ENCODE measurements at regions of chr18 and their contacts with region 1.

Region 1: GRCh38 chr18:49728542-49728941 is 84.8 kb downstream of the ACAA2 start:
- DNase-seq: peak; percentile 57
- H3K4me3 ChIP-seq: no peak overlapping the region
- H3K27ac ChIP-seq: no peak overlapping the region
- H3K4me1 ChIP-seq: peaks cover 48% of the 10 kb centered on the region
- H3K27me3 ChIP-seq: no peaks in the 10 kb centered on the region
- CTCF ChIP-seq: peak; percentile 87 to 88

Region 2: DNA sequence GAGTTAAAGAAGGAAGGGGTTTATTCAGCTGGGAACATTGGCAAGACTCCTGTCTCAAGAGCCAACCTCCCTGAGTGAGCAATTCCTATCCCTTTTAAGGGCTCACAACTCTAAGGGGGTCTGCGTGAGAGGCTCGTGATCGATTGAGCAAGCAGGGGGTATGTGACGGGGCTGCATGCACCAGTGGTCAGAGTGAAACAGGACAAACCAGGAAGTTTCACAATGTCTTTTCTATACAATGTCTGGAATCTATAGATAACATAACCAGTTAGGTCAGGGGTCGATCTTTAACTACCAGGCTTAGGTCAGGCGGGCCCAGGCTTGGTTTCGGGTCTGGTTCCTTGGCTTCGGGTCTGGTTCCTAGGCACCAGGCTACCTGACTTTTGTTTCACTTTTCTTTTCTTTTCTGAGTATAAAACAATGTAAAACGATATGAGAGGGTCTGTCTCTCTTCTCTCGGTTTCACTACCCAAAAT is 196.8 kb before region 1 on chr18:
- CTCF ChIA-PET with region 1: no interaction called
- dilution Hi-C with region 1: no loop called
- in situ Hi-C with region 1: no loop called
- intact Hi-C with region 1: no loop called
- DNase-seq: no peak
- H3K4me3 ChIP-seq: no peak overlapping the region
- H3K27ac ChIP-seq: no peak overlapping the region
- H3K4me1 ChIP-seq: no peaks in the 10 kb centered on the region
- H3K27me3 ChIP-seq: no peaks in the 10 kb centered on the region
- CTCF ChIP-seq: no peak

Region 3: DNA sequence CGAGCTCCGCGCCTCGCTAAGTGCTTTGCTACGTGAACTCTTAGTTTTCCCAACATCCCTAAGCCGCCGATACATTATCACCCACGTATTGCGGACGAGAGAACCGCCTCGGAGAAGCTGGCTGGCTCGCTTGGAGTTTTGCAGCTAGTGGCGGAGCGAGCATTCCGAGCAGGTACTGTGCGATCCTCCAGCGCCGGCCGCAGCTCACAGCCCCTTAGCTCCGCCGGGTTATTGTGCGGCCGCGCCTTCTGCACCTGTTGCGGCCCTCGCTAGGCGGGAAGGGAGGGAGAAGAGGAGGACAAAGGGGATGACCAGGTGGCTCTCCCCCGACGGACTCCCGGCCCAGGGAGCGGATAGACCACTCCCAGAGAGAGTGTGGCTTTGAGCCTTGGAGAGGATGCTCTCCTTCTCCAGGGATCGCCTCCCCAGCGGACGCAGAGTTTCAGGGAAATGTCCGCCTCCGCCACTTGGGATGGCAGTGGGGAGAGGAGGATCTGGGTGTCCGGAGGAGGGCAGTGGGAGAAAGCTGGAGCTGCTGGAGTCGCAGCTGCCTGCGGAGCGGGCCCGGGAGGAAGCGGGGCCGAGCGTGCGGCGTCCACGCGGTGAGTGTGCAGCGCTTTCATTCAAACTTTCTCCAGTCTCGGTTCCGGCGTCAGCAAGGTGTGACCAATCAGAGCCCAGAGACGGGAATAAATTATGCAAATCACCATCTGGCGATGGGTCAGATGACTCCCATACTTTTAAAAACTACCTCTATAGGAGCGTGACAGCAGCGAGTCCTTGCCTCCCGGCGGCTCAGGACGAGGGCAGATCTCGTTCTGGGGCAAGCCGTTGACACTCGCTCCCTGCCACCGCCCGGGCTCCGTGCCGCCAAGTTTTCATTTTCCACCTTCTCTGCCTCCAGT is 167.0 kb before region 1 on chr18 and contains the start of gene LIPG:
- CTCF ChIA-PET with region 1: no interaction called
- dilution Hi-C with region 1: no loop called
- in situ Hi-C with region 1: no loop called
- intact Hi-C with region 1: loop called (anchors 1 kb)
- DNase-seq: peak; percentile 97
- H3K4me3 ChIP-seq: peak within 1 kb of the TSS; percentile 40 to 70 (median 61)
- H3K27ac ChIP-seq: peak within 1 kb of the TSS; percentile 65
- H3K4me1 ChIP-seq: peaks cover 28% of the 10 kb centered on the region
- H3K27me3 ChIP-seq: no peaks in the 10 kb centered on the region
- CTCF ChIP-seq: no peak
- total RNA-seq, gene LIPG: 78.8 to 153 TPM

Region 4: GRCh38 chr18:49628881-49629795 is 99.4 kb before region 1 on chr18:
- CTCF ChIA-PET with region 1: no interaction called
- dilution Hi-C with region 1: loop called (anchors 5 kb)
- in situ Hi-C with region 1: no loop called
- intact Hi-C with region 1: no loop called
- DNase-seq: no peak
- H3K4me3 ChIP-seq: no peak overlapping the region
- H3K27ac ChIP-seq: no peak overlapping the region
- H3K4me1 ChIP-seq: peaks cover 5% of the 10 kb centered on the region
- H3K27me3 ChIP-seq: no peaks in the 10 kb centered on the region
- CTCF ChIP-seq: peak in 1 of 2 donors; percentile 31

Region 5: GRCh38 chr18:49656073-49656591 is 72.4 kb before region 1 on chr18:
- CTCF ChIA-PET with region 1: no interaction called
- dilution Hi-C with region 1: no loop called
- in situ Hi-C with region 1: no loop called
- intact Hi-C with region 1: loop called (anchors 5 kb)
- DNase-seq: peak; percentile 99
- H3K4me3 ChIP-seq: no peak overlapping the region
- H3K27ac ChIP-seq: no peak overlapping the region
- H3K4me1 ChIP-seq: peaks cover 14% of the 10 kb centered on the region
- H3K27me3 ChIP-seq: no peaks in the 10 kb centered on the region
- CTCF ChIP-seq: no peak

Region 6: DNA sequence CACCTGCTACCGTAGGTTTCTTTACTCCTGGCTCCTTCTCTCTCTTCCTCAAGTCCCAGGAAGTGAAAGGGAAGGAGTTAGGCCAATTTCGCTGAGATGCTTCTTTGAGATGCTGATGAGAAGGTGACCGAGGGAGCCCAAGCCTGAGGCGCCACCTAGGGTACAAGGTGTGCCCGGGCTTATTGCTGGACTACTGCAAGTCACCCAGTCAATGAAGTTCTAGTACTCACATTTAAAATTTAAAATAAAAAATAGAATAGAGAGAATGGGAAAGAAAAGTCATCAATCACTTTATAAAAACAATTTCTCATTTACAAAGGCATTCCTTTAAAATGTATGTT is 39.5 kb after region 1 on chr18:
- CTCF ChIA-PET with region 1: no interaction called
- dilution Hi-C with region 1: no loop called
- in situ Hi-C with region 1: no loop called
- intact Hi-C with region 1: loop called (anchors 2 kb)
- DNase-seq: peak; percentile 65
- H3K4me3 ChIP-seq: no peak overlapping the region
- H3K27ac ChIP-seq: no peak overlapping the region
- H3K4me1 ChIP-seq: no peaks in the 10 kb centered on the region
- H3K27me3 ChIP-seq: no peaks in the 10 kb centered on the region
- CTCF ChIP-seq: peak; percentile 87 to 95

Measured in mammary epithelial cell (primary cell).